ENCODE measurements at regions of chrX and their contacts with region 1.

Region 1: DNA sequence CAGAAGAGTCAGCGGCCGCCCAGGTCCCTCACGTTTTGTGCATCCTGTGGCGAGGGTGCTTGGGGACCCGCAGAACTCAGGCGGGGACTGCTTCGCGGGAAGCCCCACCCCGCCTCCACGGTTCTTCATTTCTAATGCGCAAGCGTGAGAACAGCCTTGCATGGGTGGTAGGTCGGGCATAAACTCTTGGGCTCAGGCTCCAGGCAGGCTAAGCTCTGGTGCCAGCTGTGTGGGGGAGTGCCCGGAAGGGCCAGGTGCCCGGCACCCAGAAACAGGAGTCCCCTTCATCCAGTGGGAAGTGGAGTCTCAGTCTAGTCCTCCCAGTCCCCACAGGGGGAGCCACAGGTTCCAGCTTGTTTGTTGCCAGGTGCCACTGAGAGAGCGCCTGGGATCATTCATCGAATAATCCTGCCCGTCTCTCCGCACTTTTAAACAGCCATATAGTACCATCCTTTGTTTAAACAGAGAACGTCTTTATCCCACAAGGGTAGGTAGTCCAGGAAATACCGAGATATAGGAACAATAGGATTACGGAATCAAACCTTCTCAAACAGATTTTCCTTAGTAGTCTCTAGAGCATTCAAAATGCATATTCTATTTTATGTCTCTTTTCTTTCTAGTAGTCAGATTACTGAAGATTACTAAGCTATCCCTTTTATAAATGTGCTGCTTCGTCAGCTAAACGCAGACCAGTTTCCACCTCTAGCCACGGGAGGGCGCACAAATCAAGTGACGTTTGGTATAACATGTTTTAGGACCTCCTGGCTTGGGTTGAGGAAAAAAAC is 12.7 kb upstream of the RBBP7 start:
- DNase-seq: peak; percentile 80
- H3K4me3 ChIP-seq: peak overlapping the region; percentile 58
- H3K27ac ChIP-seq: peak overlapping the region; percentile 78
- H3K4me1 ChIP-seq: peaks cover 43% of the 10 kb centered on the region
- CTCF ChIP-seq: peak; percentile 86

Region 2: DNA sequence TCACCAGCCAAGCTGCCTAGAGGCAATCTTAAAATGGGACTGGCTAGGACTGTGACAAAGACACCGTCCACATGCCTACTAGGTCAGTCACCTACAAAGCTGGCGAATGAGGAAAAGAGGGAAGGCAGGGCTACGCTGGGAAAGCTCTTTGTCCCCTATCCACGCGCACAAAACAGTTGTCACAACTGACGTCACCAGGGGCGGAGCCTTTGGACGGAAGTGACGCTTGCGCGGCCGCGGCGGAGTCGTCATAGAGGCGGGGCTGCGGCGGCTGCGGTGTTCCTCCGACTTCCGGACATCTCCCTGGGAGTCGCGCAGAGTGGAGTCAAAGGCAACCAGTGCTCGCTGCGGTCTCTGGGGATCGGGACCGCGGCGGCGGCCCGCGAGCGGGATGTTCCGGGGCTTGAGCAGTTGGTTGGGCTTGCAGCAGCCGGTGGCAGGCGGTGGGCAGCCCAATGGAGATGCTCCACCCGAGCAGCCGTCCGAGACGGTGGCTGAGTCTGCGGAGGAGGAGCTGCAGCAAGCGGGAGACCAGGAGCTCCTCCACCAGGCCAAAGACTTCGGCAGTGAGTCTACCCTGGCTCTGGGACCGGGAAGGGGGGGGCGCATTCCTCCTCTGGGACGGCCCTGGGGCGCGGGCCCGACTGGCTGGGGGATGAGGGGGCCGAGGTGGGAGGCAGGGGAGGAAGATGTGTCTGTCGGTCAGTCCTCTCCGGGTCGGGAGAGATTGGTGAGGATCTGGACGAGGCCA is 163.4 kb before region 1 on chrX and contains the start of gene SYAP1:
- CTCF ChIA-PET with region 1: no interaction called
- POLR2A ChIA-PET with region 1: no interaction called
- intact Hi-C with region 1: no loop called
- DNase-seq: peak; percentile 91
- H3K4me3 ChIP-seq: peak within 1 kb of the TSS; percentile 99
- H3K27ac ChIP-seq: peak within 1 kb of the TSS; percentile 50
- H3K4me1 ChIP-seq: peaks cover 7% of the 10 kb centered on the region
- CTCF ChIP-seq: no peak
- total RNA-seq, gene SYAP1: 16.0 and 19.7 TPM in 2 replicates

Region 3: DNA sequence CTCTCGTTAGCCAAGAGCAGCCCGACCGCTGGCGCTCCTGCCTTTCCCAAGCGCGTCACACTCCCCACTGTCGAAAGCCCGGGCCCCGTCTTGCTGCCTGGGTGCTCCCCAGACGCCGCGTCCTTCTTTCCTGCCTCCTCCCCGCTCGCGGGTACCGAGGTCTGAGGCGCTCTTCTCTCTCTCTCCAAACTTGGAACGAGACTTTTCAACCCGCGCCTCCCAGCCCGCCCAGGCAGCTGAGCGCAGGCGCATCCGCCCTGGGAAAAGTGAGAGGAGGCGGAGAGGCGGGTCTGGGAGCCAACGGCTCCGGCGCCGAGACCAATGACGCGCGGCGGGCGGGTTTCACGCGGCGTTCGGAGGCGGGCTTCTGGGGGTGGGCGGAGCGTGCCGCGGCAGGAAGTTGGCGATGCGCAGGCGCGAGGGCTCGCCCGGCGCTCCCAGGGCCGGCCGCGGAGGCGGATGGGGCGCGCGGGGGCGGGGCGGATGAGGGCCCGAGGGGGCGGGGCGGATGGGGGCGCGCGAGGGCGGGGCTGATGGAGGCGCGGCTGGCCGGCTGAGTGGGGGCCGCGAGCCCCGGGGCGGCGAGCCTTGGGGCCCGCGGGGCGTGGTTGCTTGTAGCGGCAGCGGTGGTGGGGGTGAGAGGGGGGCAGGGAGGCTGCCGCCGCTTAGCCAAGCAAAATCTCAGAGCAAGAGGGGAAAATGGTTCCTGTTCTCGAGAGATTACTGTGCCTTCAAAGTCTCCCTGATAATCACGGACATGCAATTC is 12.6 kb before region 1 on chrX and contains the start of gene RBBP7:
- CTCF ChIA-PET with region 1: interaction called, 20 read pairs
- POLR2A ChIA-PET with region 1: interaction called, 73 read pairs
- intact Hi-C with region 1: no loop called
- DNase-seq: peak; percentile 89
- H3K4me3 ChIP-seq: peak within 1 kb of the TSS; percentile 80
- H3K27ac ChIP-seq: peak within 1 kb of the TSS; percentile 97
- H3K4me1 ChIP-seq: peaks cover 61% of the 10 kb centered on the region
- CTCF ChIP-seq: no peak
- total RNA-seq, gene RBBP7: 144 and 161 TPM in 2 replicates

Region 4: GRCh38 chrX:16903274-16904022 is 20.6 kb after region 1 on chrX:
- CTCF ChIA-PET with region 1: no interaction called
- POLR2A ChIA-PET with region 1: interaction called, 20 read pairs
- intact Hi-C with region 1: no loop called
- DNase-seq: peak; percentile 39
- H3K4me3 ChIP-seq: peak overlapping the region; percentile 31
- H3K27ac ChIP-seq: peak overlapping the region; percentile 70
- H3K4me1 ChIP-seq: peaks cover 21% of the 10 kb centered on the region
- CTCF ChIP-seq: no peak

Region 5: DNA sequence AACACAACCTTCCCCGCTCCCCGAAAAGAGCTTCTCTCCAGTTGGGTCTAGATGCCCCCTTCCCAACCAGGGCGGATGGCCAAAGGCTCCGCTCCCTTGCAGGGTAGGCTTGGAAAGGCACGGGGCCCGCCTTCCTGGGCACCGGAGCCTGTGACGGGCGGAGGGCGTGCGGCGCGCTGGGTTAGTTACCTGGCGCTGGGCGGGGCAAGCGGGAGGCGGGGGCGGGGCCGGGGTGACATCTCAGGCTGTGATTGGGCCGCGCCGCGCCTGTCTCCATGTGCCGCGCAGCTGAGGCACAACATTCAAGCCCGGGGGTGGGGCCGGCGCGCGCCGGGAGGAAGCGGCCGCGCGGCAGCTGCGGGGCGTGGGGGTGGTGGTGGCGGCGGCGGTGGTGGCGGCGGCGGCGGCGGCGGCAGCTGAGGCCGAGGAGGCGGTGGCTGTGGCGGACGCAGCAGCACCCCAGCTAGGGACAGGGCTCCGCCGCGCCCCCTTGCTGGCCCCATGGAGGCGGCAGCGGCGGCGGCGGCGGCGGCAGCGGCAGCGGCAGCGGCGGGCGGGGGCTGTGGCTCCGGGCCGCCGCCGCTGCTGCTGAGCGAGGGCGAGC is 63.6 kb after region 1 on chrX and contains the start of gene REPS2:
- CTCF ChIA-PET with region 1: no interaction called
- POLR2A ChIA-PET with region 1: interaction called, 4 read pairs
- intact Hi-C with region 1: loop called (anchors 2 kb)
- DNase-seq: peak; percentile 86
- H3K4me3 ChIP-seq: peak within 1 kb of the TSS; percentile 70
- H3K27ac ChIP-seq: no peak within 1 kb of the TSS
- H3K4me1 ChIP-seq: no peaks in the 10 kb centered on the region
- CTCF ChIP-seq: no peak
- total RNA-seq, gene REPS2: 0.41 and 3.7 TPM in 2 replicates

Region 6: GRCh38 chrX:17024886-17025285 is 142.0 kb after region 1 on chrX:
- CTCF ChIA-PET with region 1: no interaction called
- POLR2A ChIA-PET with region 1: interaction called, 10 read pairs
- intact Hi-C with region 1: no loop called
- DNase-seq: peak; percentile 52
- H3K4me3 ChIP-seq: no peak overlapping the region
- H3K27ac ChIP-seq: no peak overlapping the region
- H3K4me1 ChIP-seq: peaks cover 9% of the 10 kb centered on the region
- CTCF ChIP-seq: no peak

Region 7: DNA sequence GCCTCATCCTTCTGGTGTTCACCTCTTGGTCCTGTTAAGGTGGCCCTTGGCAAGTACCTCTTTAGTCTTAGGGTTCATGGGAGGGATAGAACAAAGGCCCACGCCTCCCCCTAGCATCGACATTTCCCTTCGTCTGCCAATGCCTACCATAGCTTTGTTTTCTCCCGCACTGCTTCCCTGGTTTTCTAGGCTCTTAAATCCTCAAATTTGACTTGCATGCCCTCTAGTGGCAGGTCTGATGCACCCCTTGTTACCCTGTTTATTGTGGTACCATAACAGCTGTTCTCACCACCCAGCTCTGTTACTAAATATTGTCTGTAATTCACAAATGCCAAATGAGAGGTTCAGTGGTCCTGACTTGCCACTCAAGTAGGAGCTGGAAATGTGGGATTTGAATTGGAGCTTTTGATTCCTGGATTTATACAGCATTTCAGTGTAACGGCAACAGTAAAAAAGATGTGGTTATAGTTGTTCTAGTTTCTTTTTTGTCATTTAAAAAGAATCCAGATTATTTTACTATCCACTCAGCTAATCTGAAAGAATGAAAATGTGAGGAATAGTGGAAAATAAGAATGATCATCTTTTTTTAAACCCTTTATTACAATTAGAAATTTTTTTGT is 163.7 kb after region 1 on chrX:
- CTCF ChIA-PET with region 1: interaction called, 10 read pairs
- POLR2A ChIA-PET with region 1: interaction called, 7 read pairs
- intact Hi-C with region 1: loop called (anchors 1 kb)
- DNase-seq: peak; percentile 71
- H3K4me3 ChIP-seq: no peak overlapping the region
- H3K27ac ChIP-seq: no peak overlapping the region
- H3K4me1 ChIP-seq: peaks cover 3% of the 10 kb centered on the region
- CTCF ChIP-seq: peak; percentile 82

Region 8: DNA sequence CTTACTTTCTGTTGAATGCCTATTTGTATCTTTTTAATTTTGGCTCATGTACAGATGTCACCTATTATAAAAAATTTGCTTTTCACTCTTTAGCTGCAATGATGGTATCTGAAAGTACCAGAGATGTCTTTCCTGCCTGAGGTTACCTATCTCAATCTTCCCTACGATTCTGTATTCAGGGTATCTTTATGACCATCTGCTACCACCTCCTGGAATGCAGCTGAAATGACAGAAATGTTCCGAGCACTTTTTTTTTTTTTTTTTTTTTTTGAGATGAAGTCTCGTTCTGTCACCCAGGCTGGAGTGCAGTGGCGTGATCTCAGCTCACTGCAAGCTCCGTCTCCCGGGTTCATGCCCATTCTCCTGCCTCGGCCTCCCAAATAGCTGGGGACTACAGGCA is 199.9 kb after region 1 on chrX:
- CTCF ChIA-PET with region 1: no interaction called
- POLR2A ChIA-PET with region 1: no interaction called
- intact Hi-C with region 1: loop called (anchors 1 kb)
- DNase-seq: peak; percentile 9
- H3K4me3 ChIP-seq: no peak overlapping the region
- H3K27ac ChIP-seq: no peak overlapping the region
- H3K4me1 ChIP-seq: no peaks in the 10 kb centered on the region
- CTCF ChIP-seq: 0 out of 2 replicates have a peak, but pooled peaks have one; percentile 19

Measured in OCI-LY7 (cell line).